ENCODE measurements at regions of chr3 and their contacts with region 1.

Region 1: GRCh38 chr3:64399205-64399800 is 174.0 kb upstream of the PRICKLE2 start:
- DNase-seq: no peak
- ATAC-seq: peak; percentile 81
- H3K4me3 ChIP-seq: no peak overlapping the region
- H3K27ac ChIP-seq: no peak overlapping the region
- H3K4me1 ChIP-seq: no peaks in the 10 kb centered on the region
- H3K27me3 ChIP-seq: no peaks in the 10 kb centered on the region

Region 2: GRCh38 chr3:64484289-64484992 is 85.1 kb after region 1 on chr3:
- intact Hi-C with region 1: loop called in 1 of 2 experiments (anchors 5 kb)
- DNase-seq: peak; percentile 81 to 92
- ATAC-seq: peak; percentile 94
- H3K4me3 ChIP-seq: no peak overlapping the region
- H3K27ac ChIP-seq: no peak overlapping the region
- H3K4me1 ChIP-seq: no peaks in the 10 kb centered on the region
- H3K27me3 ChIP-seq: no peaks in the 10 kb centered on the region

Measured in aorta (tissue), 5 donors.